Heart right ventricle (tissue), 16 donors: ENCODE measurements at regions of chr7 and their contacts with region 1.

Region 1: GRCh38 chr7:66150471-66150870 is 35.8 kb downstream of the CRCP start:
- DNase-seq: peak; percentile 44 to 66
- ATAC-seq: peak; percentile 46 to 80 (median 72)
- H3K4me3 ChIP-seq: peak overlapping the region in 1 of 10 donors; percentile 13
- H3K27ac ChIP-seq: peak overlapping the region; percentile 24 to 84 (median 78)
- H3K4me1 ChIP-seq: peaks cover 18 to 63% (median 40%) of the 10 kb centered on the region in 9 donors
- H3K27me3 ChIP-seq: no peaks in the 10 kb centered on the region
- CTCF ChIP-seq: no peak

Region 2: GRCh38 chr7:66125052-66125708 is 25.3 kb before region 1 on chr7:
- intact Hi-C with region 1: no loop called
- DNase-seq: no peak
- ATAC-seq: peak in 5 of 8 donors; percentile 33 to 48 (median 38)
- H3K4me3 ChIP-seq: no peak overlapping the region
- H3K27ac ChIP-seq: peak overlapping the region in 7 of 10 donors; percentile 9 to 71 (median 47)
- H3K4me1 ChIP-seq: peaks cover 0 to 63% (median 29%) of the 10 kb centered on the region in 9 donors
- H3K27me3 ChIP-seq: no peaks in the 10 kb centered on the region
- CTCF ChIP-seq: no peak

Region 3: DNA sequence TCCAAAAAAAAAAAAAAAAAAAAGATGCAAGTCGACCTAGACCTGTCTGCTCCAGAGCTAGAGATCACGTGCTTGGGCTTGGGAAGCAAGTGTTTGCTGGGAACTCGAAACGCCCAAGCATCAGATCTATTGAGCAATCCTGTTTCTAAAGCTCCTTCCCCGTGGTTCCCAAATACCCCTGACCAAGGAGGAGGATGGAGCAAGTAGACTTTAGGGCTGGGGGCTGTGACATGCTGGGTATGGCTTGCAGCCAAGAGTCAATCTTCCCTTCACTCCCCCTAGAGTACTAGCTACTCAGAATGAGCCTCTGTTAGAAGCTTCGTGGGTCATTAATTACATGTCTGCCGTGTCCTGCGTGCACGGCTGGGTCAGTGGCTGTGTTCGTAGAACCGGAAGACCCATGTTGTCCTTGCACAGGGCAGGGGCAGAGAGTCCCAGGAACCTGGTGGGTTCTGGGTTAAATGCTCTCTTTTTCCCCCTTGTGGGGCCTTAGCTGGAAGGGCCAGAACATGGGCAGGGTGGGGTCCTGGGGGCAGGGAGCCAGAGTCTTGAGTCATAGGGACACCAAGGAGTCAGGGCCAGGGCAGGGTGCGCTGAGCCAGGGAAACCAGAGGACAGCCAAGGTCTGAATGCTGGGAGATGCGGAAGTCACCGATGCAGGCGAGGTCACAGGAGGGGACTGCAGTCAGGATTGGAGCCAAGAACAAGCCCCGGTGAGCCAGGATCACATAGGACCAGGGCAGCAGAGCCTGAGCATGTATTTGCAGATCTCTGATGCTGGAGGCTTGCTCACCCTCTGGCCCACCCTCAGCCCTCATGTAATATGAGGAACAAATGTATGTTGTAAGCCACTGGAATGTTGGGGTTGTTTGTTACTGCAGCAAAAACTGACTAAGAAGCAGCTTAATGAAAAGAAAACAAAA is 20.1 kb after region 1 on chr7:
- intact Hi-C with region 1: loop called in 1 of 10 experiments (anchors 2 kb)
- DNase-seq: peak; percentile 55 to 78
- ATAC-seq: peak; percentile 82 to 96 (median 91)
- H3K4me3 ChIP-seq: no peak overlapping the region
- H3K27ac ChIP-seq: peak overlapping the region in 7 of 10 donors; percentile 26 to 77 (median 37)
- H3K4me1 ChIP-seq: peaks cover 0 to 17% (median 8%) of the 10 kb centered on the region in 9 donors
- H3K27me3 ChIP-seq: no peaks in the 10 kb centered on the region
- CTCF ChIP-seq: no peak

Region 4: DNA sequence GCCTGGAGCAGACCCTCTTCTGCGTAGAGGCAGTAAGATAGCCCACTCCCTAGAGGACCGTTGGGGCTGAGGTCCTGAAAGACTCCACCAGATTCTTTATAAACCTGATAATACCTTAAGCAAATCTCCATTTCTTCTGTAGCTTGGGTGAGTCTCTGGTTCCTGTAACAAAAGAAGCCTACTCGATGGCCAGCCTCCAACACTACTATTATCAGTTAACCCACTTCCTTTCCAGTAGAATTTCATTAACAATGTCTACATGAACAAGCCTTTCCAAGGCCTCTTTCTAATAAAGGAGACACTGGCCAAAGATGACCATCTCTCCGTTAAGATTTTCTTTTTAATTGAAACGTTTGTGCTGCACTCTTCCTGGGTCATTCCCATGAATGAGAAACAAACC is 276.5 kb after region 1 on chr7:
- intact Hi-C with region 1: no loop called
- DNase-seq: no peak
- ATAC-seq: no peak
- H3K4me3 ChIP-seq: no peak overlapping the region
- H3K27ac ChIP-seq: no peak overlapping the region
- H3K4me1 ChIP-seq: no peaks in the 10 kb centered on the region
- H3K27me3 ChIP-seq: no peaks in the 10 kb centered on the region
- CTCF ChIP-seq: no peak